GM12878 (cell line): ENCODE measurements at regions of chr2 and their contacts with region 1.

Region 1: DNA sequence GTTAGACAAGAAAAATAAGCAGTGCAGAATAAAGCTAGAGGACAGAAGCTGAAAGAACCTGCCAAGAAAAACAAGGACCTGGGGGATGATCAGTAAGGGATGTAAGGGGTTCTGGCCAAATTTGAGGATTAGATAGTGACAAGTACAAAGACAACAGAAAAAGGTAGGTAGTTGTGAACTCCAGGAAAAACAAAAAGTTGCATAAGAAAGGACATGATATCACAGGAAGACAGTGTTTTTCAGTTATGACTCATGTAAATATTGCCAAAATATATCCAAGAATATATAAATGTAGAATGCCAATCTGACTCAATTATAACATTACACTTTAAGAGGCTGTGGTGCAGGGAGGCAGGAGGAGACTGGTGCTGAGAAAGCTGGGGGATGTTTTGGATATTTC is 209.8 kb upstream of the SH3BP4 start:
- DNase-seq: no peak
- ATAC-seq: no peak
- H3K4me3 ChIP-seq: no peak overlapping the region
- H3K27ac ChIP-seq: no peak overlapping the region
- H3K4me1 ChIP-seq: no peaks in the 10 kb centered on the region
- H3K27me3 ChIP-seq: no peaks in the 10 kb centered on the region
- CTCF ChIP-seq: no peak
- EP300 ChIP-seq: no peak
- POLR2A ChIP-seq: no peak
- RAD21 ChIP-seq: no peak

Region 2: GRCh38 chr2:234690569-234691213 is 51.3 kb before region 1 on chr2:
- CTCF ChIA-PET with region 1: no interaction called
- POLR2A ChIA-PET with region 1: no interaction called
- RAD21 ChIA-PET with region 1: no interaction called
- SMC1A ChIA-PET with region 1: no interaction called
- in situ Hi-C with region 1: no loop called
- intact Hi-C with region 1: no loop called
- DNase-seq: no peak
- ATAC-seq: no peak
- H3K4me3 ChIP-seq: no peak overlapping the region
- H3K27ac ChIP-seq: no peak overlapping the region
- H3K4me1 ChIP-seq: no peaks in the 10 kb centered on the region
- H3K27me3 ChIP-seq: no peaks in the 10 kb centered on the region
- CTCF ChIP-seq: no peak
- EP300 ChIP-seq: no peak
- POLR2A ChIP-seq: no peak
- RAD21 ChIP-seq: no peak

Region 3: DNA sequence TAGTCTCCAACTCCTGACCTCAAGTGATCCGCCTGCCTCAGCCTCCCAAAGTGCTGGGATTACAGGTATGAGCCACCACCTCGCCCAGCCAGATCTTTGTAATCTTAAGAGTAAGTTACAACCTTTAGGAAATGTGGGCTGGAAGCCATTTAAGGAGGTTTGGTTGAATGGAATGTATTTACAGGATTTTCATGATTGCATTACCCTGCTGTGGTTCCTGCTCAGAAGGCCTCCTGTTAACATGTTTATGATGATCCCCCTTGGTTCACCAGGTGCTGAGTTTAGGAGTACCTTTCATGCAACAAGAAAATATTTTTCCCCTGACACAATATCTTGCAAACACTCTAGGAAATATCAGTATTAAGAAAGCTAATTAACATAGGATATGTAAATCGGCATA is 22.4 kb after region 1 on chr2:
- CTCF ChIA-PET with region 1: no interaction called
- POLR2A ChIA-PET with region 1: no interaction called
- RAD21 ChIA-PET with region 1: no interaction called
- SMC1A ChIA-PET with region 1: no interaction called
- in situ Hi-C with region 1: no loop called
- intact Hi-C with region 1: loop called (anchors 1 kb)
- DNase-seq: no peak
- ATAC-seq: no peak
- H3K4me3 ChIP-seq: no peak overlapping the region
- H3K27ac ChIP-seq: no peak overlapping the region
- H3K4me1 ChIP-seq: no peaks in the 10 kb centered on the region
- H3K27me3 ChIP-seq: no peaks in the 10 kb centered on the region
- CTCF ChIP-seq: no peak
- EP300 ChIP-seq: no peak
- POLR2A ChIP-seq: no peak
- RAD21 ChIP-seq: no peak